T-cell (primary cell): ENCODE measurements at regions of chr2 and their contacts with region 1.

Region 1: DNA sequence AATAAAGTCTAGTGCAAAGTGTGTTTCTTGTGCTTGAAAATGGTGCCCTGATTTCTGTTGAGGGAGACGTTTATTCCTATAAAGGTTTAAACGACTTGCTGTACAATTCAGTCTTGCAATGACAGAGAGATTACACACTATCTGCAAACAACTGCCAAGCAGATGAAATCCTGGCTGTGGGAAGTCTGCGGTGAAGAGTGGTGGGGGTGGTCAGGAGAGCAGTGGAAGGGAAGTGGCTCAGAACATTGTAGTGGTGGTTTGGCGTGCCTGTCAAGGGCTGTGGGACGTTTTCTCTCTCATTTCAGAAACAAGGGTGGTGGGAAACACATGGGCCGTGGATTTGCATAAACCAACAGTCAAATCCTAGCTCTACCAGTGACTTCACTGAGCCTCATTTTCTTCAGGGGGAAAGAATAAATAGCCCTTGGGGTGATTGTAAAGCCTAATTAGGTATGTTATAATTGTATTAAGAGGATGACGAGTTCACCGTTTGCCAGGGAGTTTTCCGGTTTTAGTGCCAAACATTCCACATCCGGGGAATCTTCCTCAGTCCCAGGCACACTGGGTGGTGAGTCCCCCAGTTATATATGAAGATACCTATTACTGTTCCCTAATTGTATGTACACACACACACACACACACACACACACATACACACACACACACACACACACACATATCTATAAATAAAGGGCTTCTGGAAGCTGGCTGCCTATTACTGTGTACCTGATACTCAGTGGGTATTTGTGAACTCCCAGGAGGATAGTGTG is 115.0 kb downstream of the SPTBN1 start:
- DNase-seq: peak in 34 of 35 experiments; percentile 42 to 79 (median 60)
- ATAC-seq: peak; percentile 13 to 34 (median 20)
- H3K4me3 ChIP-seq: peak overlapping the region; percentile 4 to 20
- H3K4me3 Mint-ChIP-seq: peak overlapping the region; percentile 57 to 82 (median 75)
- H3K27ac ChIP-seq: peak overlapping the region; percentile 98
- H3K27ac Mint-ChIP-seq: peak overlapping the region; percentile 92 to 95
- H3K4me1 ChIP-seq: peaks cover 79 to 86% of the 10 kb centered on the region in 2 experiments
- H3K4me1 Mint-ChIP-seq: peaks cover 93 to 96% (median 95%) of the 10 kb centered on the region in 3 donors
- H3K27me3 ChIP-seq: no peaks in the 10 kb centered on the region
- H3K27me3 Mint-ChIP-seq: no peaks in the 10 kb centered on the region

Region 2: GRCh38 chr2:54543733-54544396 is 27.2 kb before region 1 on chr2:
- CTCF ChIA-PET with region 1: no interaction called
- POLR2A ChIA-PET with region 1: no interaction called
- DNase-seq: no peak
- ATAC-seq: no peak
- H3K4me3 ChIP-seq: no peak overlapping the region
- H3K4me3 Mint-ChIP-seq: no peak overlapping the region
- H3K27ac ChIP-seq: no peak overlapping the region
- H3K27ac Mint-ChIP-seq: no peak overlapping the region
- H3K4me1 ChIP-seq: no peaks in the 10 kb centered on the region
- H3K4me1 Mint-ChIP-seq: peaks cover 0 to 3% (median 2%) of the 10 kb centered on the region in 3 donors
- H3K27me3 ChIP-seq: no peaks in the 10 kb centered on the region
- H3K27me3 Mint-ChIP-seq: no peaks in the 10 kb centered on the region

Region 3: GRCh38 chr2:54558188-54559005 is 12.7 kb before region 1 on chr2:
- CTCF ChIA-PET with region 1: interaction called, 6 to 23 read pairs
- POLR2A ChIA-PET with region 1: interaction called, 9 to 90 read pairs
- DNase-seq: peak; percentile 32 to 82 (median 65)
- ATAC-seq: peak; percentile 68 to 72 (median 72)
- H3K4me3 ChIP-seq: peak overlapping the region; percentile 77 to 88
- H3K4me3 Mint-ChIP-seq: peak overlapping the region; percentile 93 to 98 (median 95)
- H3K27ac ChIP-seq: peak overlapping the region; percentile 84
- H3K27ac Mint-ChIP-seq: peak overlapping the region; percentile 91
- H3K4me1 ChIP-seq: peaks cover 29% of the 10 kb centered on the region in 2 experiments
- H3K4me1 Mint-ChIP-seq: peaks cover 46 to 72% (median 56%) of the 10 kb centered on the region in 3 donors
- H3K27me3 ChIP-seq: no peaks in the 10 kb centered on the region
- H3K27me3 Mint-ChIP-seq: no peaks in the 10 kb centered on the region

Region 4: GRCh38 chr2:54604871-54605270 is 33.8 kb after region 1 on chr2:
- CTCF ChIA-PET with region 1: interaction called in 1 of 2 experiments, 10 read pairs
- POLR2A ChIA-PET with region 1: interaction called, 3 read pairs
- DNase-seq: no peak
- ATAC-seq: peak; percentile 16 to 30 (median 22)
- H3K4me3 ChIP-seq: peak overlapping the region in 1 of 2 donors; percentile 29
- H3K4me3 Mint-ChIP-seq: peak overlapping the region; percentile 41 to 65 (median 49)
- H3K27ac ChIP-seq: peak overlapping the region; percentile 28
- H3K27ac Mint-ChIP-seq: peak overlapping the region; percentile 81 to 100
- H3K4me1 ChIP-seq: peaks cover 68 to 69% of the 10 kb centered on the region in 2 experiments
- H3K4me1 Mint-ChIP-seq: peaks cover 91 to 95% (median 92%) of the 10 kb centered on the region in 3 donors
- H3K27me3 ChIP-seq: no peaks in the 10 kb centered on the region
- H3K27me3 Mint-ChIP-seq: no peaks in the 10 kb centered on the region